ENCODE measurements at regions of chr1 and their contacts with region 1.

Region 1: DNA sequence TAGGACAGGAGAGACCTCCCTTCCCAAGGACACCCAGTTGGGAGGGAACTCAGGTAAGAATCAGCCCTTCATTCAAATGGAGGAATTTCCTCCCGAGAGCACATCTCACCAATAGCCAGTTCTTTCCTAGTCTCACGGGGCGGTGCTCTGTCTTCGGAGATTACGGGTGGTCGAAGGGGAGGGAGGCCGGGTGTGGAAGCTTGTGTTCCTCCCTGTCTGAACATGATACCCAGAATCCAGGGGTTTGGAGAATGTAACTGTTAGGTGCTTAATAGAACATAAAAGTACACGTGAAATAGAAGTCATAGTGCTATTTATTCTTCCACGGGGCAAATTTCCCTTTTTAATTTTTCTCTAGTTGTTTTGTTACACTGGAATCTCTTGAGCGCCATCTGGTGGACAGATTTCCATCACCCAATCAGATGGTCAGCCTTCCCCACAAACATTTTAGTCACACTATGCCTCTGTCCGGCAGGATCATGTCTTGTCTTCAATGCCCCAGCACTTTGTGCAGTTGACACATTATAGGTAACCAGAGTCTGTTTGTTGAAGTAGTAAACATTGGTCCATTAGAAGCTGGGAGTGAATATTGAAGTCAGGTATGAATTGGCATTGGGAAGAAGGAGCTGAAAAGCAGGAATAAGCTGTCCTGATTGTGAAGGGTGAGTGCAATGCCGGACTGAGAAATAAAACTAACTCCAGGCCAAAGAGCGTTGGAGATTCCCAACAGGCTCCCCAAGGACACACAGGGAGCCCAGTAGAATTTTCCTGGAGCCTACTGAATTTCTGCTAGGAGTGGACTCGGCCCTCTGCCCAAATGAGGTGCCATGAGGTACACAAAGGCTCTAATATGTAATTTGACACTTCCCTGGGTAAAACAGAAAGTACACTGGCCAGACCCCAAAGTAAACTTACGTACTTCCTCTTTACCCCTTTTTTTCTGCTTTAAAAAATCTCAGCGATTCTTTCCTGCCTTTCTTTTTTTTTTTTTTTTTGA is 27.6 kb upstream of the ZNF697 start:
- DNase-seq: peak; percentile 87
- H3K4me3 Mint-ChIP-seq: peak overlapping the region; percentile 49
- H3K27ac Mint-ChIP-seq: no peak overlapping the region
- H3K4me1 Mint-ChIP-seq: peaks cover 5% of the 10 kb centered on the region
- H3K27me3 Mint-ChIP-seq: peaks cover 6% of the 10 kb centered on the region

Region 2: GRCh38 chr1:119475866-119476439 is 199.7 kb before region 1 on chr1:
- CTCF ChIA-PET with region 1: no interaction called
- intact Hi-C with region 1: loop called (anchors 10 kb)
- DNase-seq: peak; percentile 61
- H3K4me3 Mint-ChIP-seq: no peak overlapping the region
- H3K27ac Mint-ChIP-seq: no peak overlapping the region
- H3K4me1 Mint-ChIP-seq: no peaks in the 10 kb centered on the region
- H3K27me3 Mint-ChIP-seq: peaks cover 4% of the 10 kb centered on the region

Region 3: DNA sequence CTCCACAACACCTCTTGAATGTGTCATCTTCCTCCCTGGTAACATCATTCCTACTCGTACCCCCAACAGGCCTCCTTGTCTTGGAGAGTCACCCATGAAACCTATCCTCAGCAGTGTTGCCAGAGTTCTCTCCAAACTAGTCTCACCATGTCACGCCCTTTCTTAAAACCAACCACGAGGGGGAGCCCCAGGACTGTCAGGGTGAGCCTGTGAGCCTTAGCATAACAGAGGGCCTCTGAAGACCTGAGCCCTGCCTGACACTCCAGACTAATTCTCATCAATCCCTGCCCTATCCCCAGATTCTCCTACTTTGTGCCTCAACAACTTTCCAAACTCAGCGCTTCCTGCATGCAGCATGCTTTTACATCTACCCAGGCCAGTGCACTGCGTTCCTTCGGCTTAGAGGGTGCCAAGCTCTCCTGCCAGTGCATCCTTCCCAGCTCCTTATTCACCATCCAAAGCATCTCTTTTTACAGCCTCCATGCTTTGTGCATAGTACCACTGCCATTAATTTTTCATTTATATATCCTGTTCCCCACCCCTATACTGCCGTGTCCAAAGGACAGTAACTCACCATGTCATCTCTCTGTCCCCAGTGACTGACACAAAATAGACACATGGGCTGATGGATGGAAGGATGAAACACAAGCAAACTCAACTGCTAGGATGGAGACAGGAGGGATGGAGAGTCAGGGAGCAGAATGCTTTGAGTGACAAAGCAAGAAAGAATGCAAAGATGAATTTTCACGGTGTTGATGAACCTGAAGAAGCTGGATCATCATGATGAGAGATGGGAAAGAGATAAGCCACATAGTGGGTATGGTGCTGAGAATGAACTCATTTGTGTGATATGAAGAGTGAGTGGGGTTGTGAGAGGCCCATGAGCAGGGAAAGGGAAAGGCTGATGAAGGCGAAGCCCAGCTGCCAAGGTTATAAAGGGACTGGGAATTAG is 61.6 kb before region 1 on chr1:
- CTCF ChIA-PET with region 1: interaction called, 197 read pairs
- intact Hi-C with region 1: loop called (anchors 1 kb)
- DNase-seq: peak; percentile 86
- H3K4me3 Mint-ChIP-seq: no peak overlapping the region
- H3K27ac Mint-ChIP-seq: no peak overlapping the region
- H3K4me1 Mint-ChIP-seq: no peaks in the 10 kb centered on the region
- H3K27me3 Mint-ChIP-seq: no peaks in the 10 kb centered on the region

Region 4: DNA sequence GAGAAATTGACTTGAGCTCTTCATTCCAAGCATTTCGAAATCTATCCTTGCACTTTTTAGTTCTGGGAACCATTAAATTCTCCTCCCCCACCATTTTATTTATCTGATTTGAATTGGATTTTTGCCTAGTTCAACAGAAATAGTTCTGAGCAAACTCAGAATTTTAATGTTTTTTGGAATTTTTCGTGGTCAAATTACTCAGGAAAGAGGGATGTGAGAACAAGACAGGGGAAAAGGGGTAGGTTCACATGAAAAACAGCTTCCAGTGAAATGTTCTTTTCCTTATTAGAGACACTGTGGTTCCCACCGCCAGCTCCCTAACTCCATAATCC is 21.8 kb before region 1 on chr1:
- CTCF ChIA-PET with region 1: interaction called, 28 read pairs
- intact Hi-C with region 1: no loop called
- DNase-seq: no peak
- H3K4me3 Mint-ChIP-seq: no peak overlapping the region
- H3K27ac Mint-ChIP-seq: no peak overlapping the region
- H3K4me1 Mint-ChIP-seq: no peaks in the 10 kb centered on the region
- H3K27me3 Mint-ChIP-seq: peaks cover 44% of the 10 kb centered on the region

Region 5: DNA sequence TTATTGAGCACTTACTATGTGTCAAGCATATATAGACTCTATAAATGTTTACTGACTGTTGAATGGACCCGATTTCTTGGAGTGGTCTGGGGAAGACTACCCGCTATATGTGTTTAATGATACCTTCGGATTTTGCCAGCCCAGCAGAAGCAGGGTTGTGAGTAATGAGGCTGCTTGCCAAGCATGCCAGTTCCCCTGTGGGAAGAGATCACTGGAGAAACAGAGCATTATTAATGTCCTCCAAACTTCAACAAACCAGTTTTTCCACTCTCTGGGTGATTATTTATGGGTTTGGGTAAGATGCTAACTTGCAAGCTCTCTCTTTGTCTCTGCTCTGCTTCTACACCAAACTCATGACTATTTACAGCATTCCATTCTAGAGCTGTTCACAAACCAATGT is 11.0 kb after region 1 on chr1:
- CTCF ChIA-PET with region 1: interaction called, 13 read pairs
- intact Hi-C with region 1: no loop called
- DNase-seq: no peak
- H3K4me3 Mint-ChIP-seq: no peak overlapping the region
- H3K27ac Mint-ChIP-seq: no peak overlapping the region
- H3K4me1 Mint-ChIP-seq: no peaks in the 10 kb centered on the region
- H3K27me3 Mint-ChIP-seq: no peaks in the 10 kb centered on the region

Region 6: GRCh38 chr1:119737040-119737682 is 61.5 kb after region 1 on chr1:
- CTCF ChIA-PET with region 1: no interaction called
- intact Hi-C with region 1: no loop called
- DNase-seq: no peak
- H3K4me3 Mint-ChIP-seq: no peak overlapping the region
- H3K27ac Mint-ChIP-seq: no peak overlapping the region
- H3K4me1 Mint-ChIP-seq: no peaks in the 10 kb centered on the region
- H3K27me3 Mint-ChIP-seq: no peaks in the 10 kb centered on the region

Measured in activated naive CD4-positive, alpha-beta T cell treated with anti-CD3 and anti-CD28 coated beads for 36 hours (primary cell).